ENCODE measurements at regions of chr17 and their contacts with region 1.

Region 1: DNA sequence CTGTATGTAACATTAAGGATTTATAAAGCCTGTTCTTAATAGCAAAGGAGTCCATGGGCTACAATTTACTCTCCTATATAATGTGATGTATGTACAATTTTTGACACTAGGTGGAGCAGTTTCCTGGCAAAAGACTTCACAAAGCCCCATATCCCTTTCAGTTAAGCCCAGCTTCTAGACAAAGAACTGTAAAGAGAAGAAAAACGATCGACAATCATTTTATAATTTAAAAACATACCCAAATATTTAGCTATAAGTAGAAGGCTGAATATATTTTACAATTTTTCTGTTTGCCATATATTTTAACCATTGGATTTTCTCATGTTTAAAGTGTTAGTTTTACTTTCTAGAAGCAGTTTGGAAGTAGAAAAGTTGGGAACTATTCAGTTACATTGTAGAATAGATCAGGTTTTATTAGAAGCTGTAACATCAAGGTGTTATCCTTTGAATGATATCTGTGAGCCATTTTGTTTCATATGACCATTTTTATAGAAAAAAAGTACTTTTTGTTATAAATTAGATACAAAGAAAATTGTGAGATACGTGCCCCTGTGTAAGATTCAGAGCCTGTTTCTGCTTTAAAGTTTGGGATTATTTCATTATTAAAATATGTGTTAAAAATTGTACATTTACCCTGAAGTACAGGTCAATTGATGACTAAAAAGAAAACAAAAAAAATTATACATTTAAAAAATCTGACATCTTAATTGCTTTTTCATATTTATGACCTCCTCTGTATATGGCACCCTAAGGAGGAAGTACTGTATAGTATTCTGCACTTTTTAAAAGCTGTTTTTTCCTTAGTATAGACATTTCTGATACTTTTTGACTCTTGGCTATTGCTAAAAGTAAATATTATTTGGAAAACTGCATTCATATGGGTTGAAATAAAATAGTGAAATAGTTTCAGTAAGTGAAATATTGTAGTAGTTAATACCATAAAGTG is 46.3 kb downstream of the VMP1 start:
- DNase-seq: peak; percentile 72
- CTCF ChIP-seq: peak; percentile 55

Region 2: GRCh38 chr17:59769891-59770290 is 16.1 kb after region 1 on chr17:
- CTCF ChIA-PET with region 1: interaction called, 51 read pairs
- POLR2A ChIA-PET with region 1: no interaction called
- DNase-seq: no peak
- CTCF ChIP-seq: no peak

Region 3: GRCh38 chr17:59786536-59787319 is 32.9 kb after region 1 on chr17:
- CTCF ChIA-PET with region 1: interaction called, 41 read pairs
- POLR2A ChIA-PET with region 1: interaction called, 4 read pairs
- DNase-seq: peak; percentile 78
- CTCF ChIP-seq: no peak

Region 4: GRCh38 chr17:59837308-59838051 is 83.7 kb after region 1 on chr17:
- CTCF ChIA-PET with region 1: interaction called, 93 read pairs
- POLR2A ChIA-PET with region 1: interaction called, 9 read pairs
- DNase-seq: peak; percentile 74
- CTCF ChIP-seq: no peak

Measured in GM10248 (cell line).